ENCODE measurements at regions of chr18 and their contacts with region 1.

Region 1: DNA sequence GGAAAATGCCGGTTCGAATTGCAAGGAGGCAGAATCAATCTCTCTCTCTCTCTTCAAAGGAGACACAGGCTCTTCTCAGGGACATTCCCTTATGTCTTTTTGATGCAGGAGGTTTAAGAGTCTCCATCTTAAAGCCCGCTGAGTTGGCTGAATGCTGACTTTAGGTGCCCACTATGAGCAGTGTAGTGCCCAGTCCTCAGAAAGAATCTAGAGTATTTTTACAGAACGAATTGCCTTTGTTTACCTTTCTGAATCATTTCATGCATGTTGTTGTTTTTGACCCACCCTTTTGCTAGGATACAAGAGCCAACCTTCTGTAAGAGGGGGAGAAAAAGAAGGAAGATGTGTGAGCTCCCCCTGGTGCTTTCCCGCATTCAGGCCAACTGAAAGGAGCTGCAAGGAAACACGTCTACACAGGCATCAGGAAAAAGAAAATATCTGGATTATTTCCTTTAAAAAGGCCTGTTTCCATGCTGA is 193.5 kb upstream of the TCF4 start:
- ATAC-seq: peak in 7 of 8 experiments; percentile 34 to 73 (median 48)
- H3K4me3 ChIP-seq: no peak overlapping the region
- H3K27ac ChIP-seq: no peak overlapping the region
- H3K4me1 ChIP-seq: peaks cover 5 to 12% of the 10 kb centered on the region in 2 donors

Region 2: GRCh38 chr18:55234366-55235093 is 547.0 kb before region 1 on chr18:
- in situ Hi-C with region 1: loop called in 2 of 9 experiments (anchors 25 kb)
- ATAC-seq: peak; percentile 77 to 92 (median 84)
- H3K4me3 ChIP-seq: no peak overlapping the region
- H3K27ac ChIP-seq: no peak overlapping the region
- H3K4me1 ChIP-seq: peaks cover 0 to 2% of the 10 kb centered on the region in 2 donors

Region 3: DNA sequence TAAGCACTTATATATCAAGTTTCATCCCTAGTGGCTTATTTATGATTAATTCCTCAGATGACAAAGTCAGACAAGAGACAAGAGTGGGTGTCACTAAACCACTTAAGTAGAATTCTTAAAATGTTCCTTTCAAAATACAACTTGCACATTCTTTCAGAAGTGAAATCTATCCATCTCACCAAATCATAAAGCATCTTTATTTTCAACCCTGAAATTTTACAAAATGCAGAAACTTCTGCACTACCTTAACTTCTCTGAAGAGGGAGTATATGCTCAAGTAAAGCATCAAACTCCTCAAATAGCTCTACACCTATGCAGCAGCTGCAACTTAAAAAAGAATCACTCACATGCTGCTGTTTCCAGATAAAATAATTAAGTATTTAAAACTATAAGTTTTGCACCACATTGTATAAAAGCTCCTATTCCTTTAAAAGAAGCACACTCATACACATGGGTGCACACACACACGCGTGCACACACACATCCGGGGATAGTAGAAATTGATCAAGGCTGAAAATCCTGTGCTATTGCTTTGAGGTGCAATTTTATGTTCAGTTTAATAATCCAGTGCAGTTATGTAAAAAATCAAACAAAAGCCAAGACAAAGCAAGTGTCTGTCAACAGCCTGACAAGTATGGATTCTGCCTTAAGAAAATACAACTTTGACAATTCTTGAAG is 438.0 kb before region 1 on chr18:
- in situ Hi-C with region 1: loop called in 1 of 9 experiments (anchors 25 kb)
- ATAC-seq: peak in 4 of 8 experiments; percentile 18 to 56 (median 33)
- H3K4me3 ChIP-seq: no peak overlapping the region
- H3K27ac ChIP-seq: no peak overlapping the region
- H3K4me1 ChIP-seq: peaks cover 0 to 8% of the 10 kb centered on the region in 2 donors

Region 4: GRCh38 chr18:55415258-55415871 is 366.2 kb before region 1 on chr18:
- in situ Hi-C with region 1: loop called in 2 of 9 experiments (anchors 25 kb)
- ATAC-seq: peak; percentile 79 to 97 (median 84)
- H3K4me3 ChIP-seq: no peak overlapping the region
- H3K27ac ChIP-seq: no peak overlapping the region
- H3K4me1 ChIP-seq: peaks cover 16 to 19% of the 10 kb centered on the region in 2 donors